Panc1 (cell line): ENCODE measurements at regions of chr18 and their contacts with region 1.

Region 1: DNA sequence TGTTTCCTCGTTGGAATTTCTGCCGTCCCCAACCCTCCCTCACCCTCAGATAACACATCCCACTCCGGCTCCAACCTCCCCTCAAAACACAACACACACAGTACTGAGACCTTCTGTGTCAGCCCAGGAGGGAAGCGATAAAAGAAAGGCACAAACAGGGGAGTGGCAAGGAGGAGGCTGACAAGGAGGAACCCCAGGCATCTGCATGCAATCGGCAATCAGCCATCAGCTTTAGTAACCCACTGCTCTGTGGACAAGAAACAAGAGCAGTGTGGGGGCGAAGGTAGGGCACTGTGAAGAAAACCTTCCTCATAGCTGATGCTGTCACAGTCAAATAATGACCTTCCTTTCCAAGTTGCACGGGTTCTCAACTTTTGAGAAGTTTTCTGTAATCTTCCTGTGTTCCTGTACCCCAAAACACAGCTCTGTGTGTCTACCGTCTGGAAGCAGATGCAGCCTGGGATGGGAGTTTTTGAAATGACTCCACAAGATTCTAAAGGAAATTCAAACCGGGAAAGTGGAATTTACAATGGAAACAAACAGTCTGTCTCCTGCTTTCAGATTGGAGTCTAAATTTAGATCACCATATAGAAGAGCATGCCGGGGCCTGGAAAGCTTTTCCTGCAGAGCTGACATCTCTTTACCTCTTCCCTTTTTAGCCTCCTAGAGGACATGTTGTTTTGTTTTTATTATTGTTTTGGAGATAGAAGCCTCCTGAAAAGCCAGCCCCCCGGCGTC is 16.4 kb upstream of the LPIN2 start:
- DNase-seq: no peak
- ATAC-seq: 0 out of 2 replicates have a peak, but pooled peaks have one; percentile 11
- H3K4me3 ChIP-seq: no peak overlapping the region
- H3K27ac ChIP-seq: peak overlapping the region; percentile 51; the same call in 1 of the 2 replicates
- H3K4me1 ChIP-seq: peaks cover 27% of the 10 kb centered on the region; the same call in 1 of the 2 replicates
- H3K27me3 ChIP-seq: no peaks in the 10 kb centered on the region
- CTCF ChIP-seq: no peak

Region 2: GRCh38 chr18:2729757-2730156 is 299.6 kb before region 1 on chr18:
- CTCF ChIA-PET with region 1: no interaction called
- POLR2A ChIA-PET with region 1: no interaction called
- in situ Hi-C with region 1: no loop called
- intact Hi-C with region 1: no loop called
- DNase-seq: no peak
- ATAC-seq: no peak
- H3K4me3 ChIP-seq: no peak overlapping the region
- H3K27ac ChIP-seq: no peak overlapping the region
- H3K4me1 ChIP-seq: no peaks in the 10 kb centered on the region
- H3K27me3 ChIP-seq: no peaks in the 10 kb centered on the region
- CTCF ChIP-seq: no peak

Region 3: DNA sequence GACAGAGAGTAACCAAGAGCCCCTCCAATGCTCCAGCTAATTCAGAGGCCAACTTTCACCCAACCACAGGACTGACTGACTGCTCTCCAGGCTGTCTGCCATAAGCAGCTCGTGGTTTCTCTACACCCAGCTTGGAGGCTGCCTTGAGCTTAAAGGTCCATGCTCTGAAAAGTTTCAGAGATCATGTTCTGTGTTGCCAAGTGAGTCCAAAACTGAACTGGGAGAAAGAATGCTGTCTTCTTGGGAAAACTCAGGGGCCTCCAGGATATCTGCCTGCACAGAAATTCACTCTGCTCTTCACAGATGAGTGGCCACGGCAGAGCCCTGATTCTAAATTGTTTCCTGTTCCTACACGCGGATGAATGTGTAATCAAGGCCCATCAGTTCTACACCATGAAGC is 67.6 kb before region 1 on chr18:
- CTCF ChIA-PET with region 1: no interaction called
- POLR2A ChIA-PET with region 1: no interaction called
- in situ Hi-C with region 1: no loop called
- intact Hi-C with region 1: loop called (anchors 10 kb)
- DNase-seq: no peak
- ATAC-seq: peak; percentile 74
- H3K4me3 ChIP-seq: no peak overlapping the region
- H3K27ac ChIP-seq: peak overlapping the region; percentile 83
- H3K4me1 ChIP-seq: peaks cover 32% of the 10 kb centered on the region
- H3K27me3 ChIP-seq: no peaks in the 10 kb centered on the region
- CTCF ChIP-seq: no peak

Region 4: DNA sequence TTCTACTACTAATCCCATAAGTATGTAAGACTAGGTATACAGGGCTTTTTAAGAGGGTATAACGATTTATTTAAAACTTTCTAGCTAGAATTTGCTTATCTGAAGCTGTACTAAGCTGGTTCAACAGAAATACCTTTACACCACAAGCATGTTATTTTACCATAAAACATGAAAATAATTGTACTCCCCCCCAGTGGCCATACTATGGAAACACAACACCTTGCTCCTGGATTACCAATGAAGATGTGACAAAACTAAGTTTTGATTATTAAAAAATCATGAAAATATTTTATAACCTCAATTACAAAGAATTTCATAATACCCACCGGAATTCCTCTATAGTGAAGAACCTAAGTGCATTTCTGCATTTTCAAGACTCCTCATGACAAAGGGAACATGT is 43.8 kb before region 1 on chr18:
- CTCF ChIA-PET with region 1: no interaction called
- POLR2A ChIA-PET with region 1: no interaction called
- in situ Hi-C with region 1: no loop called
- intact Hi-C with region 1: no loop called
- DNase-seq: no peak
- ATAC-seq: no peak
- H3K4me3 ChIP-seq: no peak overlapping the region
- H3K27ac ChIP-seq: peak overlapping the region; percentile 96; the same call in 1 of the 2 replicates
- H3K4me1 ChIP-seq: peaks cover 45% of the 10 kb centered on the region
- H3K27me3 ChIP-seq: no peaks in the 10 kb centered on the region
- CTCF ChIP-seq: peak; percentile 31; the same call in 1 of the 2 replicates